AG04449 (cell line): ENCODE measurements at regions of chr11 and their contacts with region 1.

Region 1: GRCh38 chr11:46392421-46393230 is 1.1 kb upstream of the CHRM4 start:
- DNase-seq: no peak
- H3K4me3 ChIP-seq: peak overlapping the region; percentile 48
- CTCF ChIP-seq: no peak

Region 2: DNA sequence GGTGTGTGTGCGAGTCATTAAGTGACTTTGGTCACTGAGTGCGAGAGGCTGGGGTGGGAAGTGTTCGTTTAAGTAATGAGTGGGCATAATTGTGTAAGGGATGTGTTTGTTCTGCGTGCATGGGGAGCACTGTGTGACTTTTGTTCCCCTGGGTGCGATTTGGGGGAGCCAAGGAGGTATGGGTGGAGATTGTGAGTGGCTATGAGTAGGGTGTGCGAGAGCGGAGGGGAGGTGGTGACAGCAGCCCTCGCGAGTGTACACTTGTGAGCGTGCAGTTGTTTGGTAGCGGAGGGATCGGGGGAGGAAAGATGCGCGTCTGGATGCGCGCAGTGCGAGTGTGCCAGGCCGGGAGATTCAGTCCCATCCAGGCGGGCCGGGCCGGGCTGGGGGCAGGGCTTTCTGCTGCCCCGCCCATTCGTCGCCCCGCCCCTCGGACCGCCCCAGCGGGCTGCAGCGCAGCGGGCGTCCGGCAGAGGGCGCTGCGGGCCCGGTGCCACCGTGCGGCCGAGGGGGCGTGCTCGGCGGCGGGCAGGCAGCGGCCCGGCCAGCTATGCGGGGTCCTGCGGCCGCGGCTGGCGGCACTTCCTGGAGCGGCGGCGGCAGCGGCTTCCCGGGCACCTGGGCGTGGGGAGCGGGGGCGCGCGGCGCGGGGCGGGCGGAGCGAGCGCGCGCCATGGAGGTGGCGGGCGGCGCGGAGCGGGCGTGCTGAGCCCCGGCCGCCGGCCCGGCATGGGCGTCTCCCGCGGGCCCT is 45.6 kb before region 1 on chr11 and contains the start of gene DGKZ:
- CTCF ChIA-PET with region 1: interaction called, 18 read pairs
- POLR2A ChIA-PET with region 1: no interaction called
- DNase-seq: no peak
- H3K4me3 ChIP-seq: peak within 1 kb of the TSS; percentile 90
- CTCF ChIP-seq: peak; percentile 62

Region 3: GRCh38 chr11:46404476-46405017 is 11.9 kb after region 1 on chr11:
- CTCF ChIA-PET with region 1: interaction called, 34 read pairs
- POLR2A ChIA-PET with region 1: no interaction called
- DNase-seq: no peak
- H3K4me3 ChIP-seq: no peak overlapping the region
- CTCF ChIP-seq: no peak

Region 4: GRCh38 chr11:46521961-46522681 is 129.5 kb after region 1 on chr11:
- CTCF ChIA-PET with region 1: interaction called, 70 read pairs
- POLR2A ChIA-PET with region 1: no interaction called
- DNase-seq: peak; percentile 16
- H3K4me3 ChIP-seq: no peak overlapping the region
- CTCF ChIP-seq: peak; percentile 41

Region 5: GRCh38 chr11:46537537-46538295 is 145.1 kb after region 1 on chr11:
- CTCF ChIA-PET with region 1: interaction called, 103 read pairs
- POLR2A ChIA-PET with region 1: no interaction called
- DNase-seq: no peak
- H3K4me3 ChIP-seq: no peak overlapping the region
- CTCF ChIP-seq: peak; percentile 91

Region 6: GRCh38 chr11:46616998-46617675 is 224.5 kb after region 1 on chr11 and contains the starts of genes ATG13 and HARBI1:
- CTCF ChIA-PET with region 1: interaction called, 30 read pairs
- POLR2A ChIA-PET with region 1: no interaction called
- DNase-seq: peak; percentile 23
- H3K4me3 ChIP-seq: peak within 1 kb of the TSS; percentile 100
- CTCF ChIP-seq: no peak